OCI-LY7 (cell line): ENCODE measurements at regions of chr6 and their contacts with region 1.

Region 1: DNA sequence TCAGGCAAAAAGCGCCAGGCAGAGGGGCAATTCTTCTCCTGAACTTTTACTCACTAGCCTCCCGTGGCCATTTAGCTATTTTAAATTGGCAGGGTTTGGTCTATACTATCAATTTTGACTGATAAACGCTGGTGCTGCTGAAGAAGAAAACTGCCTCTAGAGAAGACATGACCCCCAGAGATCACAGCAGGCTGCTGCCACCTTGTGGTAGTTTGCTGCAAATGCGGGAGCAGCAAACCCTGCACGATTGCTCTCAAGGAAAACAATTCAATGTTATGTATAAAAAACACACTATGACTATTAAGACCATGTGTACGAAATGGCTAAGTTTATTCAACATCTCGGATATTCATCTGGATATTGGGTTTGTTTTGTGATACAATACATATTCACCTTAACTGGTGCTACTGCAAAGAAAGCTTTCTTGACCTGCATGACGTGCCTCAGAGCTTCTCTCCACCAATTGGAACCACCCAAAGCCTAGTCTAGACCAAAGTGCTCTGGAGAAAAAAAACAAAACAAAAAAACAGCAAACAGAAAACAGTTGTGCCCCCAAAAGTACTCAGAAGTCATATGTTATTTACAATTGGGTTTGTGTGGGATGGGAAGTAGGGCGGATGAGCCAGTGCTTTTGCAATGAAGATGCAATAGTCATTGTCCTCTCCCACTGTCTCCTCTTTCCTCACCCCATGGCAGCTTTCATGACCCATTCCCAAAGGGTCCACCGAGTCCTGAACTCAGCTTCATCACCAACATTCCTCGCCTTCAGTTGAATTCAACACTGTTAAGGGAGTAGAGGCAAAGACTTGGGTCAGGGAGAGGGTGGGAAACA is 19.6 kb upstream of the IL17F start:
- DNase-seq: peak; percentile 74
- H3K4me3 ChIP-seq: no peak overlapping the region
- H3K27ac ChIP-seq: no peak overlapping the region
- H3K4me1 ChIP-seq: no peaks in the 10 kb centered on the region
- CTCF ChIP-seq: peak; percentile 98

Region 2: GRCh38 chr6:51339719-51340118 is 924.2 kb before region 1 on chr6:
- CTCF ChIA-PET with region 1: no interaction called
- POLR2A ChIA-PET with region 1: no interaction called
- intact Hi-C with region 1: no loop called
- DNase-seq: no peak
- H3K4me3 ChIP-seq: no peak overlapping the region
- H3K27ac ChIP-seq: no peak overlapping the region
- H3K4me1 ChIP-seq: no peaks in the 10 kb centered on the region
- CTCF ChIP-seq: no peak

Region 3: DNA sequence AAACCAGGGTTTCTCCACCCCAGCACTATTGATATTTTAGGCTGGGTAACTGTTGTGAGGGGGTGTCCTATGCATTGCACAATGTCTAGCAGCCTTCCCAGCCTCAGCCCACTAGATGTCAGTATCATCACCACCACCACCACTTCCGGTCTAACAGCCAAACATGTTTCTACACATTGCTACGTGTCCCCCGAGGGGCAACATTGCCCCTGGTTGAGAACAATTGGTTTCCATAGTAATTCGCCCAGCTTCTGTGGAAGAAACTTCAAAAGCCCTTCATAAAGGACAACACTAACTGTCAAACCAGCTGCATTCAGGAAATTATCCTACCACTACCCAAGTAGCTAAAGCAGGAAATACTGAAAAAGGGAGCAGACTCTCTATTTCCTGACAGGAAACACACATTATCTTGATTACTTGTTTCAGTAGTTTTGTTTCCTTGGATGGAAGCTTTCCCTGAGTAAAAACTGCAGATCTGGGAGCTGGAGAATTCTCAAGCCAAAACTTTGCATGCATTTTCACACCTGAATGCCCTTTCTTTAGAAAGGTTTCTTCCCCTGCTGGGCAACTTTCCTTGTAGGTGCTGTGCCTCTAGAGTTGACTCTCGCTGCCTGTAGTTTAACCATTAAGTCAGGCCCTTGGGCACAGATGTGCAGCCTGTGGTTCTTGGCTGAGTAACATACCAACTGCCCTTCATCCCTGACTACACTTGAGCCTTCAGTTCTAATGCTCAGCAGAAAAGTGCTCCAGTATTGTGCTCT is 200.2 kb before region 1 on chr6:
- CTCF ChIA-PET with region 1: no interaction called
- POLR2A ChIA-PET with region 1: no interaction called
- intact Hi-C with region 1: loop called (anchors 5 kb)
- DNase-seq: peak; percentile 81
- H3K4me3 ChIP-seq: no peak overlapping the region
- H3K27ac ChIP-seq: no peak overlapping the region
- H3K4me1 ChIP-seq: peaks cover 7% of the 10 kb centered on the region
- CTCF ChIP-seq: peak; percentile 91

Region 4: DNA sequence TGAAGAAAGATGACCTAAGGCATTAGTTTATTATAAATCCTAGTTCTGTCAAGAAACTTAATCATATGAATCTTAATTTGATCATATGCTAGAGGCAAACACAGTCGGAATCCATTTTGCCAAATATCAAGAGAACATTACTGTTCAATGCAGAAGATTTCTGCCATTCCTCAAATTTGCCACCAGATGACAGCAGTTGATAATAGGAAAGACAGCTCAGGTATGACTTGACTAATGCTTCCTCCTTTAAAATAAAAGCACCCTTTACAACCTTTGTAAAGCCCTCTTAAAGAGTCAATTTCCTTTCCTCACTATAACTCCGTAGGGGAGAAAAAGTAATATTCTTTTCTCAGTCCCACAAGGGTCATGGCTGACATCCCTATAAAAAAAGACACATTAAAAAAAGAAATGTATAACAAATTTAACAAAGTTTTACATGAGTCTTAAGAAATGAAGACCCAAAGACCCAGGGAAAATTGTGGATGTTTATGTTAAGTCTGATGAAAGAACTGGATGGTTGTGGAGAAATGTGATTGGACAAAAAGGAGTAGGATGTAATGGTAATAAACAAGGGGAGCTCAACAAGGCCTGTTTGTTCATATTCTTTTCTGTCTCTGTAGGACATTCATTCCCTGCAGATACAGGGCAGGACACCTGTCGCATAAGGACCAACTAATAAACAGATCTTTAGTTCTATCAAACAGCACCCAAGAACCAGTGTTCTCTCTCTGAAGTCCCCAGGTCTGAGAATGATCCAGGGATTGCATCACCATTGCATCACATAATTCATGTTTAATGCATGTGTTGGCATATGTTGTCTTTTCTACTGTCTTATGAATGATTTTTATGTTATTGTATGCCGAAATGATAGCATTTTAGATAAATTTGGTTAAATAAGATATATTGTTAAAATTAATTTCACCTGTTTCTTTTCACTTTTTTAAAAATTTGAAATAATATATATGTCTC is 100.7 kb before region 1 on chr6:
- CTCF ChIA-PET with region 1: no interaction called
- POLR2A ChIA-PET with region 1: no interaction called
- intact Hi-C with region 1: loop called (anchors 5 kb)
- DNase-seq: peak; percentile 46
- H3K4me3 ChIP-seq: no peak overlapping the region
- H3K27ac ChIP-seq: no peak overlapping the region
- H3K4me1 ChIP-seq: no peaks in the 10 kb centered on the region
- CTCF ChIP-seq: peak; percentile 82

Region 5: DNA sequence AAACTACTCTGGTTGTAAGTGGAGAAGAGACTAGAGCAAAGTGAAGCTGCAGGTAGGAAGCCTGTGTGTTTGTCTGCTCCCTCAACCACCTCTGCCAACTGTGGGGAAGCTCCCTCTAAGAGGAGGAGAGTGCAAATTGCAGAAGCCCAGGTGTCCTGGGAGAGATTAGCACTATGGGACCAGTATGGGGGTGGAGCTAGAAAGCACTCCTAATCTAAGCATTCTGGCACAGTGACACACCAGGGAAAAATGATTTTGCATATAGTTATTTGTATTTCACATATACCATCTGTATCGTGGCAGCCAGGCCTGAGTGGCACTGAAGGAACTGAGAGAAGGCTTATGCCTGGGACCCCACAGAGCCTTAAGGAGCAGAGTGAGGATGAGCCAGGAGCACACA is 526.9 kb after region 1 on chr6:
- CTCF ChIA-PET with region 1: no interaction called
- POLR2A ChIA-PET with region 1: no interaction called
- intact Hi-C with region 1: no loop called
- DNase-seq: no peak
- H3K4me3 ChIP-seq: no peak overlapping the region
- H3K27ac ChIP-seq: no peak overlapping the region
- H3K4me1 ChIP-seq: no peaks in the 10 kb centered on the region
- CTCF ChIP-seq: no peak